ENCODE measurements at regions of chr2 and their contacts with region 1.

Region 1: DNA sequence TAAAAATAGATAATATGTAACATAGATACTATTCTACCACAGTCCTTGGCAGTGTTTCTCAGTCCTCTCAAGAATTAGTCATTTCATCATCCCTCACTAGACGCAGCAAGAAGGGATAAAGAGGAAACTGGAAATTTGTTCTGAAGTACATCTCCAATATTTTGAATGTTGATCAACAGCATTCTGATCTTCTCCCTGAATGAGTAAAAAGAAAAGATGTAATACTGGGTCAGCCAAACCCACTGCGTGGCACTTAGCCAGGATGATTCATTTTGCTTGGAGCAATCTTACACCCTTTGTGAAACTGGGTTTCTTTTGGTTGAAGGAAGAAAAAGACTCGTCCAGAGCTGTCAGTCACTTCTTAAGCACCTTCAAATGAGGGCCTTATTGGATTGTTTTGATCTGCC is 54.1 kb downstream of the TAF1B start:
- DNase-seq: no peak
- H3K4me3 Mint-ChIP-seq: no peak overlapping the region
- H3K27ac Mint-ChIP-seq: peak overlapping the region; percentile 14
- H3K4me1 Mint-ChIP-seq: peaks cover 29% of the 10 kb centered on the region
- H3K27me3 Mint-ChIP-seq: no peaks in the 10 kb centered on the region

Region 2: GRCh38 chr2:8551622-8552074 is 1345.7 kb before region 1 on chr2:
- intact Hi-C with region 1: no loop called
- DNase-seq: no peak
- H3K4me3 Mint-ChIP-seq: no peak overlapping the region
- H3K27ac Mint-ChIP-seq: peak overlapping the region; percentile 1
- H3K4me1 Mint-ChIP-seq: peaks cover 25% of the 10 kb centered on the region
- H3K27me3 Mint-ChIP-seq: no peaks in the 10 kb centered on the region

Region 3: DNA sequence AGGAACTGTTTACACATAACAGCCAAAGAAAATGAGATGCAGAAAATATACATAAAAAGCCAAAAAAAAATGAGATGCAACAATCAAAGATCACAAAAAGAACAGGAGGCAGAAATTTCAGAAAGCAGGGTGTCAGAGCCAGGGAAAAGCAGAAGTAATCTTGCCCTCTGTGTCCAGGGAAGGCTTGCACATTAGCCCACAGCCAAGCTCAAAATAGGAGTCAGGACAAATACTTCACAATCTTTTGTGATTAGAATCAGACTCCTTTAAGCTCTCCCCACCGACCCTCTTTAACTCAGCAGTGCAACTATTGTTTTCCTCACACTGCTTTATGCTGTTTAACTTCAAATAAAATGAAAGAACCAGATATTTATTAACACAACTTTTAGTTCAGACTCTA is 388.4 kb before region 1 on chr2:
- intact Hi-C with region 1: no loop called
- DNase-seq: no peak
- H3K4me3 Mint-ChIP-seq: no peak overlapping the region
- H3K27ac Mint-ChIP-seq: no peak overlapping the region
- H3K4me1 Mint-ChIP-seq: no peaks in the 10 kb centered on the region
- H3K27me3 Mint-ChIP-seq: no peaks in the 10 kb centered on the region

Region 4: GRCh38 chr2:9914384-9915065 is 17.2 kb after region 1 on chr2:
- intact Hi-C with region 1: loop called (anchors 2 kb)
- DNase-seq: no peak
- H3K4me3 Mint-ChIP-seq: no peak overlapping the region
- H3K27ac Mint-ChIP-seq: no peak overlapping the region
- H3K4me1 Mint-ChIP-seq: peaks cover 12% of the 10 kb centered on the region
- H3K27me3 Mint-ChIP-seq: no peaks in the 10 kb centered on the region

Region 5: GRCh38 chr2:9975805-9976447 is 78.6 kb after region 1 on chr2:
- intact Hi-C with region 1: loop called (anchors 5 kb)
- DNase-seq: no peak
- H3K4me3 Mint-ChIP-seq: no peak overlapping the region
- H3K27ac Mint-ChIP-seq: peak overlapping the region; percentile 4
- H3K4me1 Mint-ChIP-seq: peaks cover 72% of the 10 kb centered on the region
- H3K27me3 Mint-ChIP-seq: peaks cover 4% of the 10 kb centered on the region

Measured in activated T-helper 1 cell treated with anti-CD3 and anti-CD28 coated beads, Interleukin-12 subunit alpha, Interleukin-12 subunit beta, Interleukin-2, Interleukin-4 antibody, amounts not matched to agents 30 ng/mL and 10 ng/mL and 1 ng/mL, durations not matched to agents 14 hours and 24 hours and 36 hours (primary cell).